Lower leg skin (tissue), 4 donors: ENCODE measurements at regions of chr3 and their contacts with region 1.

Region 1: GRCh38 chr3:47420511-47421484 is 40.0 kb downstream of the PTPN23 start:
- DNase-seq: peak; percentile 87 to 98
- H3K4me3 ChIP-seq: no peak overlapping the region
- CTCF ChIP-seq: peak in 1 of 3 donors; percentile 77
- POLR2A ChIP-seq: no peak

Region 2: DNA sequence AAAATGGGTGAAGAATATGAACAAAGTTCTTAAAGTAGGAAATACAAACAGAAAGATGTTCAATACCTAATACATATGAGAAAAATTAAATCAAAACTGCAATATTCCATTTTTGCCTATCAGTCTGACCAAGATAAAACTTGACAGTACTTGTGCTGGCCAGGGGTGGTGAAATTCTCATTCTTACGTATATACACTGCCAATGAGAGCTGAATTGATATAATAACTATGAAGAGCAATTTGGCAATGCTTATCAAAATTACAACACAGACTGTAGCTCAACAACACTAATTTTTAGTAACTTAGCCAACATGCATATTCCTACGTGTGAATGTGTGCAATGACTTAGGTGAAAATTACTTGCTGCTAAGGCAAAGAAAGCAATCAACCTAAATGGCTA is 347.1 kb before region 1 on chr3:
- intact Hi-C with region 1: no loop called
- DNase-seq: no peak
- H3K4me3 ChIP-seq: no peak overlapping the region
- CTCF ChIP-seq: no peak
- POLR2A ChIP-seq: no peak

Region 3: DNA sequence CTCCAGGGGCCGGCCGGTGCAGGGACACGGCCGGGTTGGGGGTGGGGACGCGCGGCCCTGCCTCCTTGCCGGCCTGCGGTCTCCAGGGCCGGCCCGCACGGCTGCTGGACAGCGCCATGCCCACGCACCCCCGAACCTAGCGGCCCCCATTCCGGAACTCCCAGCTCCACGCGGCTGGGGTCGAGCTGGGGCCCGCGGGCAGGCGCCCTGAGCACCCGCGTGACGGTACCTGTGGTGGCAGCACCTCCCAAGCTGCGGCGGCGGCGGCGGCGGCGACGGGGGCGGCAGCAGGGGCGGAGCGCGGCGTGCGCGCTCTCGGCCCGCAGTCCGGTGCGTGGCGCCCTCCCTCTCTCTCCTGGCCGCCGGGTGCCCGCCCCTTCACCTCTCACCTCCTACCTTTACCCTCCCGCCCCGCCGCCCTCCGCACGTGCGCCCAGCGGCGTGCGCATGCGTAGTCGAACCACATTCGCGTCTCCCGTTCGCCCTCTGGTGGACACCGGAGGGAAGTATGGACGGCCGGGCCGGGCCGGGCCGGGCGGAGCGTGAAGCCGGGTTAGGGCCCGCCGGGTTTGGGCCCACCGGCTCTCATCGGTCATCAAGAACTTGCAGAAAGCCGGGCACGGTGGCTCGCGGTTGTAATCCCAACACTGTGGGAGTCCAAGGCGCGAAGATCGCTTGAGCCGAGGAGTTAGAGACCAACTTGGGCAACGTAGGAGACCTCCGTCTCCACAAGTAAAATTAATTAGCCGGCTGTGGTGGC is 55.0 kb after region 1 on chr3 and contains the start of gene SCAP:
- intact Hi-C with region 1: loop called (anchors 2 kb)
- DNase-seq: peak; percentile 89 to 99
- H3K4me3 ChIP-seq: peak within 1 kb of the TSS; percentile 77
- CTCF ChIP-seq: peak in 1 of 3 donors; percentile 66
- POLR2A ChIP-seq: no peak
- total RNA-seq, gene SCAP: 100 to 188 (median 123) TPM

Region 4: GRCh38 chr3:47799733-47800132 is 378.9 kb after region 1 on chr3:
- intact Hi-C with region 1: loop called (anchors 10 kb)
- DNase-seq: no peak
- H3K4me3 ChIP-seq: no peak overlapping the region
- CTCF ChIP-seq: no peak
- POLR2A ChIP-seq: no peak